Dorsolateral prefrontal cortex (tissue), 120 donors: ENCODE measurements at regions of chr6 and their contacts with region 1.

Region 1: DNA sequence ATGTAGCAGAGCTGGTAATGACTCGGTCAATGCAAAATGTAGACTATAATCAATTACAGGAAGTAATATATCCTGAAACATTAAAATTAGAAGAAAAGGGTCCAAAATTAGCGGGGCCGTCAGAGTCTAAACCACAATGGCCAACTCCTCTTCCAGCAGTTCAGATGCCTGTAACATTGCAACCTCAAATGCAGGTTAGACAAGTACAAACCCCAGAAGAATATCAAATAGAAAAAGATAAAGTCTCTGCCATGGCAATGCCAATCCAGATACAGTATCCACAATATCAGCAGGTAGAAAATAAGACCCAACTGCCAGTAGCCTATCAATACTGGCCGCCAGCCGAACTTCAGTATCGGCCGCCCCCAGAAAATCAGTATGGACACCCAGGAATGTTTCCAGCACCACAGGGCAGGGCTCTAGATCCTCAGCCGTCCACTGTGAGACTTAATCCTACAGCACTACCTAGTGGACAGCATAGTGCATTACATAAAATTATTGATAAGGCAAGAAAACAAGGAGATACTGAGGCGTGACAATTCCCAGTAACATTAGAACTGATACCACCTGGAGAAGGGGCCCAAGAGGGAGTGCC is 158.4 kb downstream of the GPX5 start:
- DNase-seq: peak in 1 of 10 donors; percentile 16
- H3K4me3 ChIP-seq: peak overlapping the region in 2 of 59 donors; percentile 4 to 19
- H3K27ac ChIP-seq: no peak overlapping the region
- H3K27me3 ChIP-seq: peaks cover 0 to 76% (median 26%) of the 10 kb centered on the region in 45 donors
- CTCF ChIP-seq: peak; percentile 17 to 68 (median 53)

Region 2: DNA sequence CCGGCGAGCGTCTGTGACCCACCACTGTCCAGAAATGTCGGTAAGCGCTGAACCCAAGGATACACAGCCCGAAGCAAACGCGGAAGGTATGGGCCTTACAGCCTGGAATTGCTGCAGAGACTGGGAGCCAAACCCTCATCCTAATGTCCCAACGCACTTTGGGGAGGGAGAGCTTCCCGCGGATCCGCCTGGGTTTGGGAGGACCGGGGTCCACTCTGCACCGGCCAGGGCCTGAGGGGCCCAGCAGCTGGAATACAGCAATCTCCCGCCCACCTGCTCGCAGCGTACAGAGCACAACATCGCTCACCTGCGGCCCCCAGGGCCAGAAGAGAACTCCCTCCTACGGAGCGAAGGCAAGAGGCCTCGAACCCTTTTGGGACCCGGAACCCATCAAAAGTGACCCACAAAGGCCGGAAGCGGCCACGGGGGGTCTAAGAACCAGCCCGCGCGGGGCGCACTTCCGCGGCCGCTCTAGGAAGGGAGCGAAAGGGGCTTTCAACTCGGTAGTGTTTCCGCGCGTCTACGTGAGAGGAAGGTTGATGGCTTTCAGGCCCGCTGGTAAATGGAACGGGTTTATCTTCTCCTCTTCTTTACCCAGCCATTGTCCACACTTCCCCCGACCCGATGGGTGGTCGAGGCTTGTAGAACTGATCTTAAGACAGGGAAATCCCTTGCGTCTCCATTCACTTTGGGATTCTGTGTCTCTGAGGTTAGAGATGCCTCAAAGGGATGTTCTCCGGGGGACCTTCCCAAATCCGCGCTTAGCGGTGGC is 284.5 kb before region 1 on chr6 and contains the start of gene ZSCAN12:
- intact Hi-C with region 1: loop called in 1 of 2 experiments (anchors 10 kb)
- DNase-seq: peak; percentile 68 to 89 (median 84)
- H3K4me3 ChIP-seq: peak within 1 kb of the TSS; percentile 62 to 99 (median 88)
- H3K27ac ChIP-seq: peak within 1 kb of the TSS in 55 of 59 donors; percentile 3 to 91 (median 76)
- H3K27me3 ChIP-seq: no peaks in the 10 kb centered on the region
- CTCF ChIP-seq: peak; percentile 20 to 81 (median 72)
- total RNA-seq, gene ZSCAN12: 5.0 to 10.7 (median 8.0) TPM

Region 3: DNA sequence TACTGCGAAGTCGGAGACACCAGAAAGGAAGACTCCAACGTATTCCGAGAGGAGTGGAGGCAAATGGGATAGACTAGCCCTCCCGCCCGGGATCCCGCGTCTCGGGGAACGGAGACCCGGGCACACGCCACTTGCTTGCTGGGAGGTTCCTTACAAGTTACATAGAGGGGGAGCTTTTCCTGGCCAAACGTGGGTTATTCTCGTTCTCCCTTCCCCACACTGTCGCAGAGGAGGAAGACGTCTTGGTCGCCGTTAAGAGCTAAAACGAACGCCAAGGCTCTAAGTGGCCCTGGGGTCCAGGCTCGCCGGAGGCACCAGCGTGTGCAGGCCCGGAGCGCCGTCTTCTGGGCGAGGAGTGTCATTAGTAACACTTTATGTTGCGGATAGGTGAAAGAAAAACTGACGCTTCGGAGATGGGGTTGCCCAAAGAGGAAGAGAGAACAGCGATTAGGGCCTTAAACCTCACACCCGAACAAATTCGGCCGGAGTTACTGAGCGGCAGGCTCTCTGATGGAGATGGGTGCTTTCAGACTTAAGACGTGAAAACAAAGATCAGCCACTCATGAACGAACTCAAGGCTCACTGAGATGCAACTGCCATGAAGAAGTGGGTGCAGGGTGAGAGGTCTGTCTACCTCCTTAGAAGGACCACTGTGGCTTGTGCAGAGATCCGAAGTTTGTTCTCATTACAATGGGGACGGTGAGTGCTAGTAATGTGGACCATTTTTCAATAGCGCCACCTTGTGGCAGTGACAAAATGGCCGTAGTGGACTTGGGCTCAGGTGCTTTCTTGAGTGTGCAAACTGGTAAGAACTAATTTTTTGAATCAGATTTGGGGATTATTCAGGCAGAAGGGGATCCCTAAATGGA is 332.8 kb after region 1 on chr6:
- intact Hi-C with region 1: loop called (anchors 2 kb)
- DNase-seq: peak; percentile 50 to 86 (median 70)
- H3K4me3 ChIP-seq: peak overlapping the region; percentile 26 to 80 (median 59)
- H3K27ac ChIP-seq: peak overlapping the region in 1 of 59 donors; percentile 38
- H3K27me3 ChIP-seq: peaks cover 0 to 76% (median 34%) of the 10 kb centered on the region in 45 donors
- CTCF ChIP-seq: peak; percentile 65 to 96 (median 86)

Region 4: GRCh38 chr6:29589423-29590048 is 905.5 kb after region 1 on chr6:
- intact Hi-C with region 1: loop called (anchors 5 to 10 kb)
- DNase-seq: peak in 3 of 10 donors; percentile 42 to 65 (median 47)
- H3K4me3 ChIP-seq: no peak overlapping the region
- H3K27ac ChIP-seq: no peak overlapping the region
- H3K27me3 ChIP-seq: no peaks in the 10 kb centered on the region
- CTCF ChIP-seq: peak; percentile 79 to 98 (median 92)